Activated naive CD4-positive, alpha-beta T cell treated with anti-CD3 and anti-CD28 coated beads for 36 hours (primary cell): ENCODE measurements at regions of chr6 and their contacts with region 1.

Region 1: DNA sequence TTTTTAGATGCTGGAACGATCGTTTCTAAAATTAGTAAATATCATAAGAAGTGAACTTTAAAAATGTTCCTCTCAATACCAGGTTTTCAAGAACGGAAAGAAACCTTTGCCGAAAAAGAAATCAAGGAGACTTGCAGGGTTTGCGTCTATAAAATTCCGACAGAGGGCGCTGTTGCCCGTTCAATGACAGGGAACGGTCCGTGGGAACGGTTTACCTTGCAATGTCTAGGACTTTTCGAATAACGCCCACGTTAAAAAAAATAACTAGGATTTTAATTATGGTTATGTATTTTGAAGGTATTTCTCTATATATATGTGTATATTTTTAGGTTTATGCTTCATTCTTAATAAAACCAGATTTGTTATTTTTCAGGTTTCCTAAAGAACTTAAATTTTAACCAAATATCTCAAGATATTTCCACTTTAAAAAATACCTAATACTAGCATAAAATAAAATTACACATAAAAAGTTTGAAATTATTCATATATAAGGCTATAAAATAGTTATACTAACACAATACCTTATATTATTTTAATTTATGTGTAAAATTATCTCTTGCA is 2.5 kb upstream of the TFAP2B start:
- DNase-seq: peak; percentile 79
- H3K4me3 Mint-ChIP-seq: peak overlapping the region; percentile 79
- H3K27ac Mint-ChIP-seq: no peak overlapping the region
- H3K4me1 Mint-ChIP-seq: peaks cover 14% of the 10 kb centered on the region
- H3K27me3 Mint-ChIP-seq: peaks cover 68% of the 10 kb centered on the region

Region 2: DNA sequence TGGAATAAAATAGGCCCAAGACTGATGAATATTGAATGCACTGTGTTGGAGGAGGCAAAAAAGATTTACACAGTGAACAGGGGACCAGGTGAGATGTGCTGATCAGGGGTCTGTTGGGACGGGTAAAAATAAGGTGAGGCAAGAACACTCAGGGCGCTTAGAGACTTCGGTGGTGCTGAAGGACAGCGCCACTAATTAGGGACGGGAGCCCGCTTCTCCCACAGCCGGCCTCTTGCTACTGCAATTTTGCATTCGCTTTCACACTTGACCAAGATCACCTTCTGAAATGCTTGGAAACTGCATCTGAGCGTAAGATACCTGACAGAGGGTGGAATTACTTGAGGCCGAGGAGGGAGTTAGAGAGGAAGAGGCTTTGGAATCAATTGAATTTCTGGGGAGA is 95.6 kb before region 1 on chr6:
- CTCF ChIA-PET with region 1: no interaction called
- intact Hi-C with region 1: loop called (anchors 5 kb)
- DNase-seq: no peak
- H3K4me3 Mint-ChIP-seq: no peak overlapping the region
- H3K27ac Mint-ChIP-seq: no peak overlapping the region
- H3K4me1 Mint-ChIP-seq: no peaks in the 10 kb centered on the region
- H3K27me3 Mint-ChIP-seq: peaks cover 74% of the 10 kb centered on the region

Region 3: DNA sequence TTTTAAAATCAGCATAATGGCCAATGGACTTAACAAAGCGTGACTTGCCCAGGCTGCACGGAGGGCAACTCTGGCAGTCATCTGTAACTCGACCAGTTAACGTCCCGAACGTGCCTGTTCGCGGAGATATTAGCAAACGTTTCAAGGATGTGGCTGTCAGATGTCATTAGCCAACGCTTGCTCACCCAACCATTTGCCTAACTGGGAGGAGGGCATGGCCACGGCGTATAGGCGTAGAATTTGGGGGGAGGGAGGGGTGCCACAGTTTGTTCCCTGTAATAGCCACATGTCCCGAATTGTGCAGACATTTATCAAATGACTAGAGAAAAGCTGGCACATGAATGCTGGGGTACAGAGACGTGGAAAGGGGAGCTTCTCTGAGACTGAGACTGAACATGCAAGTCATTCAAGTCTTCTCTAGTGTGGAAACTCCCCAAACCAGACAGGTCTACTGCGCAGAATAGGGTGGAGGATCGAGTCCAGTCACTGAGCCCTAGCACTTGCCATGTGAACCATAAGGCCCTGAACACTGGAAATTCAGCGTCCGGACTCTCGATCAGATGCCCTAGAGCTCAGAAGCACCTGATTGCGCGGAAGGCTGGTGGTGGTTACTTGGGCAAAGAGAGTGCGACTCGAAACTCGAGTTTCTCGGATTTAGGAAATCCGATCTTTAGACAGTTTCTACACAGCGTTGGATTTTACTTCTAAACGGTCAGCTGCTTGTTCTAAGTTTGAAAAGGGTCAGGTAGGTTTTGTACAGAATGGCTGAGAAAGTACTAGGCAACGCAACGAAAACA is 35.1 kb after region 1 on chr6:
- CTCF ChIA-PET with region 1: no interaction called
- intact Hi-C with region 1: no loop called
- DNase-seq: no peak
- H3K4me3 Mint-ChIP-seq: no peak overlapping the region
- H3K27ac Mint-ChIP-seq: no peak overlapping the region
- H3K4me1 Mint-ChIP-seq: no peaks in the 10 kb centered on the region
- H3K27me3 Mint-ChIP-seq: peaks cover 64% of the 10 kb centered on the region

Region 4: GRCh38 chr6:50868466-50868865 is 52.3 kb after region 1 on chr6:
- CTCF ChIA-PET with region 1: no interaction called
- intact Hi-C with region 1: no loop called
- DNase-seq: no peak
- H3K4me3 Mint-ChIP-seq: no peak overlapping the region
- H3K27ac Mint-ChIP-seq: no peak overlapping the region
- H3K4me1 Mint-ChIP-seq: no peaks in the 10 kb centered on the region
- H3K27me3 Mint-ChIP-seq: no peaks in the 10 kb centered on the region

Region 5: GRCh38 chr6:51541847-51542246 is 725.7 kb after region 1 on chr6:
- CTCF ChIA-PET with region 1: no interaction called
- intact Hi-C with region 1: loop called (anchors 10 kb)
- DNase-seq: no peak
- H3K4me3 Mint-ChIP-seq: no peak overlapping the region
- H3K27ac Mint-ChIP-seq: no peak overlapping the region
- H3K4me1 Mint-ChIP-seq: no peaks in the 10 kb centered on the region
- H3K27me3 Mint-ChIP-seq: no peaks in the 10 kb centered on the region

Region 6: GRCh38 chr6:51855310-51856082 is 1039.3 kb after region 1 on chr6:
- CTCF ChIA-PET with region 1: no interaction called
- intact Hi-C with region 1: loop called (anchors 2 kb)
- DNase-seq: peak; percentile 27
- H3K4me3 Mint-ChIP-seq: no peak overlapping the region
- H3K27ac Mint-ChIP-seq: no peak overlapping the region
- H3K4me1 Mint-ChIP-seq: no peaks in the 10 kb centered on the region
- H3K27me3 Mint-ChIP-seq: peaks cover 4% of the 10 kb centered on the region

Region 7: DNA sequence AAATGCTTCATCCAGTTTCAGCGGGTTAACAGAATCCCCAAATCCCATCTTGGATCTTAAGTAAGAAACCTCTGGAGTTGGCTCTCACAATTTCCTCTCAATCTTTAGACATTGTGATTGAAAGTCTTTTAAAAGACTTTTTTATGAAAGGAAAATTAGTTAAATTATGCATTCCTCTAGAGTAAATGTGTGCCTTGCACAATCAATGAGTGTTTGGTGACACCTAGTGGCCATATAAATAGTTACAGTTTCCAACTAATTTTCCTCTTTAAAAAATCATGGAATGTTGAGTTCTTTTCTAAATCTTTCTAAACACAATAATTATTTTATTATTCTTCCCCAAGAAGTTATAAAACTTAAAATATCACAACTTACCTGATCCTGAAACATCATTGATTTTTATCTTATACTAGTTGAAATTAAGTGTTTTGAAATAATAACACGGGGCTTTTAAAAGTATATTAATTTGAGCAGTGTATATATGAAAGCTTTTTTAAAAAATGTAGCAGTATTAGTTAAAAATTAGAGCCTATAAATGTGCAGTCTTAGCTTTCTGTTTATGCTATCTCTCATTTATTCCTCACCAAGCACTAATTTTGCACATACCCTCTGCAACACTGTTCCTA is 1204.9 kb after region 1 on chr6:
- CTCF ChIA-PET with region 1: no interaction called
- intact Hi-C with region 1: loop called (anchors 1 kb)
- DNase-seq: no peak
- H3K4me3 Mint-ChIP-seq: no peak overlapping the region
- H3K27ac Mint-ChIP-seq: no peak overlapping the region
- H3K4me1 Mint-ChIP-seq: no peaks in the 10 kb centered on the region
- H3K27me3 Mint-ChIP-seq: peaks cover 6% of the 10 kb centered on the region

Region 8: GRCh38 chr6:52664186-52664990 is 1848.2 kb after region 1 on chr6:
- CTCF ChIA-PET with region 1: no interaction called
- intact Hi-C with region 1: loop called (anchors 5 kb)
- DNase-seq: peak; percentile 86
- H3K4me3 Mint-ChIP-seq: no peak overlapping the region
- H3K27ac Mint-ChIP-seq: no peak overlapping the region
- H3K4me1 Mint-ChIP-seq: peaks cover 3% of the 10 kb centered on the region
- H3K27me3 Mint-ChIP-seq: no peaks in the 10 kb centered on the region